ENCODE measurements at regions of chr11 and their contacts with region 1.

Region 1: DNA sequence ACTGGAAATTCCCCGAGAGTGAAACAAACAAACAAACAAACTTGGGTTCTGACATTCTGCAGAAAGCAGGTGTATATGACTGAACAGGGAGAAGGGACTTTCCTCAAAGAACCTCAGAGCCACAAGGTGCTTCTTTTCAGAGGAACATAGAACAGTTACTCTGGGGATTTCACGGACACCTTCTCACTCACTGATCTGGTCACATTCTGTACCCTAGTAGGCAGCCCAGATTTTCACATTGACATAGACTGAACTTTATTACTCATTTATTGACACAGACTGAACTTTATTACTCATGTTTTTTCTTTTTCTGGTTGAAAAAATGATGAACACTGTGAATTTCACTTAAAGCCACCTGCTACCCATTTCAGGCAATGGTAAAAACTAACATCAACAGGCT is 263.0 kb downstream of the OPCML start:
- DNase-seq: no peak
- H3K4me3 ChIP-seq: no peak overlapping the region
- H3K4me3 Mint-ChIP-seq: no peak overlapping the region
- H3K27ac ChIP-seq: no peak overlapping the region
- H3K27ac Mint-ChIP-seq: peak overlapping the region in 1 of 7 donors; percentile 57
- H3K4me1 ChIP-seq: no peaks in the 10 kb centered on the region
- H3K4me1 Mint-ChIP-seq: no peaks in the 10 kb centered on the region
- H3K27me3 ChIP-seq: no peaks in the 10 kb centered on the region
- H3K27me3 Mint-ChIP-seq: no peaks in the 10 kb centered on the region

Region 2: GRCh38 chr11:133219543-133219942 is 49.7 kb before region 1 on chr11:
- CTCF ChIA-PET with region 1: no interaction called
- POLR2A ChIA-PET with region 1: no interaction called
- intact Hi-C with region 1: no loop called
- DNase-seq: no peak
- H3K4me3 ChIP-seq: no peak overlapping the region
- H3K4me3 Mint-ChIP-seq: no peak overlapping the region
- H3K27ac ChIP-seq: no peak overlapping the region
- H3K27ac Mint-ChIP-seq: no peak overlapping the region
- H3K4me1 ChIP-seq: no peaks in the 10 kb centered on the region
- H3K4me1 Mint-ChIP-seq: no peaks in the 10 kb centered on the region
- H3K27me3 ChIP-seq: no peaks in the 10 kb centered on the region
- H3K27me3 Mint-ChIP-seq: peaks cover 1 to 7% of the 10 kb centered on the region in 2 donors

Region 3: GRCh38 chr11:133323346-133323745 is 54.1 kb after region 1 on chr11:
- CTCF ChIA-PET with region 1: no interaction called
- POLR2A ChIA-PET with region 1: no interaction called
- intact Hi-C with region 1: loop called (anchors 10 kb)
- DNase-seq: no peak
- H3K4me3 ChIP-seq: no peak overlapping the region
- H3K4me3 Mint-ChIP-seq: no peak overlapping the region
- H3K27ac ChIP-seq: no peak overlapping the region
- H3K27ac Mint-ChIP-seq: no peak overlapping the region
- H3K4me1 ChIP-seq: no peaks in the 10 kb centered on the region
- H3K4me1 Mint-ChIP-seq: no peaks in the 10 kb centered on the region
- H3K27me3 ChIP-seq: no peaks in the 10 kb centered on the region
- H3K27me3 Mint-ChIP-seq: peaks cover 0 to 2% of the 10 kb centered on the region in 2 donors

Measured in CD4-positive, alpha-beta memory T cell (primary cell).